ENCODE measurements at regions of chr9 and their contacts with region 1.

Region 1: DNA sequence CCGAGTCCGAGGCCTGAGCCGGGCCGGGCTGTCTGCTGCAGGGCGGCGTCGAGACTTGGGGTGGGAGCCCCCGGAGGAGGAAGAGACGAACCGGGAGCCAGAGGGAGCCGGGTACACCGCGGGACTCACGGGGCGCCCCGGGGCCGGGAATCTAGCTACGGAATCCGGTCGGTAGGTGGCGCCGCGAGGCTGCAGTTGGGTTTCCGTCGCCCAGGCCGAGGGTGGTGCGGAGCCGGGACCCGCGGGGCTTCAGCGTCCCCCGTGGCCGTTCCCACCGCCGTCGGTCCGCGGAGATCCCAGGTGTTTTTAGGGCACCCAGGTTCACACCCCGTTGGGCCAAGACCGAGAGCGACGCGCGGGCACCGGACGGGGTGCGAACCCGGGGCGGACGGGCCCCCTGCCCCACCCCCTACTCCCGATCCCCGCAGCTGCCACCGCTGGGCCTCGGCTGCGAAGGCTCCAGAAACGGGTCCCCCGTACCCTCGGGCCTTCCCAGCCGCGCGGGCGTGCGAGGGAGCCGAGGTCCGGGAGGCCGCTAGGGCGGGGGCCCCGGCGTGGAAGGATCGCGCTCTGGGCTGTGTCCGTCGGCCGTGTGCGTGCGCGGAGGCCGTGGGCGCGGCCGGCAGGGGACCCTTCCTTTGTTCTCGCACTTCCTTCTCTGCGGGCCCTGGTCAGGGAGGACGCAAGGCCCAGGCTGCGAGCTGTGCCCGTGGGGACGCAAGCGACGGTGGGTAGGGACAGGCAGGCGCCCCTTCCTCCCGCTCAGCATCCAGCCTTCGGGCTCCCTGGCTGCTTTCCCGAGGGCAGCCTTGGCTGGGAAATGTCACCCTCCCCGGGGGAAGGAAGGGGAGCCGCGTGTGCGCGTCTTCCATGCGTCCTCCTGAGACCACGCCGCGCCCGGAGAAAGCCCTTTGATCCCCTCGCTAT is 146.6 kb downstream of the GAPVD1 start:
- DNase-seq: peak; percentile 76
- H3K4me3 ChIP-seq: peak overlapping the region; percentile 36 to 62 (median 57)
- H3K27ac ChIP-seq: peak overlapping the region; percentile 39 to 67 (median 58)
- H3K4me1 ChIP-seq: peaks cover 3 to 15% (median 9%) of the 10 kb centered on the region in 4 donors
- H3K27me3 ChIP-seq: peaks cover 14% of the 10 kb centered on the region
- CTCF ChIP-seq: peak; percentile 82 to 91 (median 82)
- EP300 ChIP-seq: no peak
- POLR2A ChIP-seq: no peak

Region 2: GRCh38 chr9:125558453-125559092 is 150.3 kb after region 1 on chr9:
- in situ Hi-C with region 1: loop called in 1 of 4 experiments (anchors 10 kb)
- intact Hi-C with region 1: loop called (anchors 5 kb)
- DNase-seq: peak; percentile 63
- H3K4me3 ChIP-seq: no peak overlapping the region
- H3K27ac ChIP-seq: peak overlapping the region in 1 of 4 donors; percentile 33
- H3K4me1 ChIP-seq: peaks cover 0 to 6% (median 1%) of the 10 kb centered on the region in 4 donors
- H3K27me3 ChIP-seq: no peaks in the 10 kb centered on the region
- CTCF ChIP-seq: peak; percentile 69 to 84 (median 77)
- EP300 ChIP-seq: no peak
- POLR2A ChIP-seq: no peak

Region 3: GRCh38 chr9:125631391-125632085 is 223.3 kb after region 1 on chr9:
- in situ Hi-C with region 1: loop called in 3 of 4 experiments (anchors 25 kb)
- intact Hi-C with region 1: loop called (anchors 5 kb)
- DNase-seq: peak; percentile 20
- H3K4me3 ChIP-seq: no peak overlapping the region
- H3K27ac ChIP-seq: no peak overlapping the region
- H3K4me1 ChIP-seq: peaks cover 17 to 34% (median 24%) of the 10 kb centered on the region in 4 donors
- H3K27me3 ChIP-seq: no peaks in the 10 kb centered on the region
- CTCF ChIP-seq: peak; percentile 50 to 78 (median 60)
- EP300 ChIP-seq: no peak
- POLR2A ChIP-seq: no peak

Region 4: DNA sequence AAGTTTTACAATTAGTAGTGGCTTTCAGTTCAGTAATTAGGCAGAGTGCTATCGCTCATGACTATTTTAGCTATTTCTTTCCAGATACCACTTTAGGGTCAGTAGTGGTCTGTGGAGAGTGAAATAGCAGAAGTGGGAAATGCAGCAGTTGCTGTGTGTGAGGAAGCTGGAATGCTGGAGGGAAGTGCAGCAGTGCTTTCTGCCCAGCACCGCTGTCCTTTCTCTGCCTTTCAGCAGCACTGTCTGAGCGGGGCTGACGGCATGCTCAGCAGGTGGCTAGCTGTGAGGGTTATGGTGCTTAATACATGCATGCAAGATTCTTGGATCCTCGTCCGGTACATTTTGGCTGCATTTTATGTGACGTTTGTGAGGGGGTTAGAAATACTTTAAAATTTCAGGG is 552.8 kb after region 1 on chr9:
- in situ Hi-C with region 1: loop called in 1 of 4 experiments (anchors 25 kb)
- intact Hi-C with region 1: no loop called
- DNase-seq: no peak
- H3K4me3 ChIP-seq: no peak overlapping the region
- H3K27ac ChIP-seq: no peak overlapping the region
- H3K4me1 ChIP-seq: no peaks in the 10 kb centered on the region
- H3K27me3 ChIP-seq: no peaks in the 10 kb centered on the region
- CTCF ChIP-seq: no peak
- EP300 ChIP-seq: no peak
- POLR2A ChIP-seq: no peak

Region 5: DNA sequence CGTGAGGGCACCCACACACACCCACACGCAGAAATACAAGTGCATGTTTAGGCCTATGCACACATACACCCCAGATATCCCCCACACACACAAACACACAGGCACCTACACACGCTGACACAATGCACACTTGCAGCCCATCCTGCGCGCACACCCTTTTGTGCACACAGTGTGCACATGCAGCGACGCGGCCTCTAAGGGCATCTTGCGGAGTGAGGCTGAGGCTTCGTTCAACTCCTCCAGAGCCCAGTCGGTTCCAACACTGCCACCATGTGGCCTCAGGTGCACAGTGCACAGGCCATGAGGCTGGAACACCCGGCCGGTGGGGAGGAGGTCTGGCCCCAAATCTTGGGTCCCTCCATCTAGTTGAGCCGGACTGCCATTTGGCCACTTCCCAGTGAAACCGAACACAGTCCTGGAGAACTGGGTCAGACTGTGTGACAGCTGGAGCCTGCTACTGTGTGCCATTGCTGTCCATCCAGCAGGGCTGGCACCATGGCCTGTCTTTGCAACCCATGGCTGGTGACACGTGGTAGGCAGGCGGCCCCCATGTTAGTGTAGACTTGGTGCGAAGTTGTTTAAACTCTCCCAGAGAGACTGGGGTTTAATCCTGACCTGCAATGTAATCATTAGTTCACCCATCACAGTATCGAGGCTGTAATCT is 820.7 kb after region 1 on chr9:
- in situ Hi-C with region 1: loop called (anchors 5 to 25 kb)
- intact Hi-C with region 1: loop called (anchors 10 kb)
- DNase-seq: peak; percentile 69
- H3K4me3 ChIP-seq: no peak overlapping the region
- H3K27ac ChIP-seq: no peak overlapping the region
- H3K4me1 ChIP-seq: no peaks in the 10 kb centered on the region
- H3K27me3 ChIP-seq: peaks cover 42% of the 10 kb centered on the region
- CTCF ChIP-seq: peak; percentile 89 to 93 (median 92)
- EP300 ChIP-seq: no peak
- POLR2A ChIP-seq: no peak

Region 6: DNA sequence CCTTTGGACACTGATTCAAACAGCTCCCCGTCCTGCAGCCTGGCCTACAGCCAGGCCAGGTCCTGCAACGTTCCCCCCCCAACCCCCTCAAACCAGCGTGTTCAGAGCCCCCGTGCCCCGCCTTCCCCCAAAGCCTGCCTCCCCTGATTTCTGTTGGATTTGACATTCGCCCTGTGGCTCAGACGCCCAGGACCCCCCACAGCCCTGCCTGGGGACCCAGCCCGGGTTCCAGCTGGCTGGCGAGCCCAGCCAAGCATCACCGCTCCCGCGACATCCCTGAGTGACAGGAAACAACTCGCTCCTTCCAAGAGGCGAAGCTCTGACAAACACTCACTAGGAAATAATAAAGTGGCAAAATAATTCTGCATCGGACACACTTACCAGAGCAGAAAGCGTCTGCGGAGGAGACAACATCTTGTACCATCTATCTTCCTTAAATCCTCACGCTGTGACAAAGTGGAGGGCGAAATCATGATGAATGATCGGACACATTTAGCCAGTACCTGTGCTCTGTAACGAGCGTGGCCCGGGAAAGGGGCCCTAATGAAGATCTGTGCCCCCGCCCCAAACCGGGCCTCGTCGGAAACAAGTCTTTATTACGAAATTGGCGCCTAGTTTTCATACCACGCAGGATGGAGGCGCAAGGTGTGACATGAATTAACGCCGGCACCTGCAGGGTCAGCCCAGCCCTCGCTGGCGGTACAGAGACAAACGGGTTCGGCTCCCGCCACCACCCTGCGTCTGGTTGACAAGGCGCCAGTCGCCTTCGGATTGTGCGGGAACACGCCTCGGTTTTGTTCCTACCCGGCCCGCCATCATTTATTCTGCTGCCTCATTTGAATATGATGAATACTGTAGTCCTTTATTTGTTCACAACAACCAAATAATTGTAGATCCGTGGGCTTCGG is 827.4 kb after region 1 on chr9:
- in situ Hi-C with region 1: loop called in 2 of 4 experiments (anchors 10 to 25 kb)
- intact Hi-C with region 1: no loop called
- DNase-seq: no peak
- H3K4me3 ChIP-seq: no peak overlapping the region
- H3K27ac ChIP-seq: no peak overlapping the region
- H3K4me1 ChIP-seq: no peaks in the 10 kb centered on the region
- H3K27me3 ChIP-seq: no peaks in the 10 kb centered on the region
- CTCF ChIP-seq: no peak
- EP300 ChIP-seq: no peak
- POLR2A ChIP-seq: no peak

Region 7: DNA sequence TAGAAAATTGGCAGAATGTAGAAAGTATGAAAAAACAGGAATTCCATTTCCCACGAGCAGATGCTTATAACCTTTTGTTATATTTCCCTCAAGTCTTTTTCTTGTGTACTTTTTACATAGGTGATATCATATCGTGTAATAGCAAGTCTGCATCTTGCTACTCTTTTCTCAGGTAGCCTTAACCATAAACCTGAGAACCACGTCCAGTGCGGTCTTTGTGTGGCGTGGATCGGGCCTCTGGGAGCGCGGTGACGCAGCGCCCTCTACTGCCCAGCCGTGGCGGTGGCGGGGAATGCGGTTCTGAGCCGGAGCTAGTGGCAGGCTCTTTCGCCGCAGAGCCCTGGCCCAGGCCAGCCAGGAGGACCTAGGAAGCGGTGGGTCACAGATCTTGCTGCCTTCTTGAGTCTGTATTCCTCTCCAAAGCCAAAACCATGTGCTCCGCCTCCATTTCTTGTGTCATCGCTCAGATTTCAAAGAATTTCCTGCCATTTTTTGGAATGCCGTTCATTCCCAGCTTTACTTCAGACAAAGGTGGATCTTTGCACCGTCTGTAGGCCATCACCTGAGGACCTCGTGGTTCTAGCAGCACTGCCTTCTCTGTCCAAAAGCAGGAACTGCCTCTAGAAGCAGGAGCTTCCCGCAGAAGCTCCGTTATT is 990.3 kb after region 1 on chr9:
- in situ Hi-C with region 1: loop called in 1 of 4 experiments (anchors 25 kb)
- intact Hi-C with region 1: loop called (anchors 5 kb)
- DNase-seq: peak; percentile 87
- H3K4me3 ChIP-seq: no peak overlapping the region
- H3K27ac ChIP-seq: no peak overlapping the region
- H3K4me1 ChIP-seq: peaks cover 0 to 20% (median 0%) of the 10 kb centered on the region in 4 donors
- H3K27me3 ChIP-seq: no peaks in the 10 kb centered on the region
- CTCF ChIP-seq: peak; percentile 95 to 98 (median 96)
- EP300 ChIP-seq: no peak
- POLR2A ChIP-seq: no peak

Measured in transverse colon (tissue), 4 donors.